Lower leg skin (tissue), 4 donors: ENCODE measurements at regions of chr6 and their contacts with region 1.

Region 1: DNA sequence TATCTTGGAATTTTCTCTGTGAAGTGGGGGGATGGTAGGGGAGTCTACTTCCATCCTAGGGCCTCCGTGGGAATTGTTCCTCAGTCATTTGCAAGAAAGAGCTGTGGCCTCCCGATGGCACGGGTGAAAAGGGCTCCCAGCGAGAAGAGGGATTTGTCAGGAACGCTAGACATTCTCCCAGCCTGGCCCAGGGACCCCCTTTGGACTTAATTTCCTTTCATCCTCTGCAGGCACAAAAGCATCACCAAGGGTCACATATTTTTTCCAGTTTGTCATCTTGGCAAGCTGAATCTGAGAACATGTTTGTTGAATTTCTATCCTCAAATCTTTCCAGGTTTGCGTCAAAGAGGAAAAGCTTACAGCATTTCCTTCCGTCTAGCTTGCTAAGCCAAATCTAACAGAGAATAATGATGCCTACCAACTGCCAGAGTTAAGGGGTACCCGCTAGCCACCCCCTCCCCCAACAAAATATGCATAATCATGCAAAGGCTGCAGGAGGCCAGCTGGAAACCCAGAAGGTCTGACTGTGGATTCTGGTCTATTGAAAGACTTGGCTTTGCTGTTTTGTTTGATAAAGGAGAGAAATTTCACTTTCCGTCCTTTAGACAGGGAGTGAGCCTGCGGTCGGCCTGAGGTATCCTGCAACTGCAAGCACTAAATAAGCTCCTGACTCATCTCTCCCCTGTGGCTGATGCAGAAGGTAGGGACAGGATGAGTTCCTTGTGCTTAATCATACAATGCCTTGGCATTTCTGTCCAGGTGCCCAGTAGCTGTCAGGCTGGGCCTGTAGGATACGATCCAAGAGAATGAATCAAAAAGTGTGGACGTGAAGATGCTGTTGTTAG is 23.1 kb downstream of the PSMG4 start:
- DNase-seq: peak in 1 of 2 donors; percentile 84
- H3K4me3 ChIP-seq: no peak overlapping the region
- CTCF ChIP-seq: no peak
- POLR2A ChIP-seq: no peak

Region 2: DNA sequence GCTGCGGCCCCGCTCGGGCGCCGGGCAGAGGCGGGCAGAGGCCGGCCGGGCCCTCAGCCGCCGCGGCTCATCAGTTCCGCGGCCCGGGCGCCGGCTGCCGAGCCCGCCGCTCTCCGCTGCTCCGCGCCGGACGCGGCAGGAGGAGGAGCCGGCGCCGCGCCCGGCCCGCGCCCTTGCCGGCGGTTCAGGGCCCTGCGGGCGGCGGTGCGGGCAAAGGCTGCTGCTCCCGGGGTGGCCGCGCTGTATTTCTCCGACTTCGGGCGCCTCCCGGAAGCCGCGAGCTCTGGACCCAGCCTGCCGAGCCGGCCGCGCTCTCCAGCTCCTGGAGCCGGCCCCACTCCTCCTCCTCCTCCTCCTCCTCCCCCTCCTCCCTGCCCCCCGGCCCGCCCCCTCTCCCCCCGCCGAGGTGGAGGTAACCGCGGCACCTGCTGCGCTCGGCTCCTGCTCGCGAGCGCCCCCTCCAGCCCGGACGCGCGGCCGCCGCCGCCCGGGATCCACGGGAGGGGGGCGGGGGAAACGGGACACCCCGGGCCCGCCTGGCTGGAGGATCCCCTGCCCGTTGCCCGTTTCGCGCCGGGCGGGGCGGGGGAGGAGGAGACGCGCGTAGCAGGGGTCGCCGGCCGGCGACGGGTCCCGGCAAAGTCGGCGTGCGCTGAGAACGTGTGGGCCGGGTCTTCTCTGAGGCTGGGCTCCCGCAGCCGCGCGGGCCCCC is 175.1 kb after region 1 on chr6 and contains the start of gene SLC22A23:
- intact Hi-C with region 1: loop called (anchors 10 kb)
- DNase-seq: peak; percentile 34 to 92
- H3K4me3 ChIP-seq: peak within 1 kb of the TSS; percentile 39
- CTCF ChIP-seq: no peak
- POLR2A ChIP-seq: no peak
- total RNA-seq, gene SLC22A23: 29.2 to 50.7 (median 43.2) TPM

Region 3: DNA sequence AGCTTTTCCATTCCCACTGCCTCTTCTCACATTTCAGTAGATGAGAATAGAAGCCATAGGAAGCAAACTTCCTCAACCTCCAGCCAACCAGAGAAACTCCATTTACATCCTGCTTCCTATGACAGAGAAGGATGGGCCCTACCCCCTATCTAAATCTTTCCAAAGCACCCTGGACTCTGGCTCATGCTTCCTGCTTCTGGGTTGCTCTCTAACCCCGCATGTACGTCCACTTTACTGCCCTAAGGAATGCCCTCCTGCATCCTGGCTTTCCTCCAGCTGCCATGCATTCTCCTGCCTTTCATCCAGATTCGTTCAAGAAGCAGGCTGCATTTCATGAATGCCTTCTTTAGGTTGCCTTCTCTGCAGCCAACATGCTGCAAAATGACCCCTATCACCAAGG is 705.2 kb after region 1 on chr6:
- intact Hi-C with region 1: loop called (anchors 10 kb)
- DNase-seq: no peak
- H3K4me3 ChIP-seq: no peak overlapping the region
- CTCF ChIP-seq: no peak
- POLR2A ChIP-seq: no peak